Aorta (tissue), 5 donors: ENCODE measurements at regions of chr9 and their contacts with region 1.

Region 1: GRCh38 chr9:13915591-13916326 is 398.2 kb downstream of the NFIB start:
- DNase-seq: no peak
- ATAC-seq: peak; percentile 51
- H3K4me3 ChIP-seq: no peak overlapping the region
- H3K27ac ChIP-seq: peak overlapping the region; percentile 67 to 71
- H3K4me1 ChIP-seq: peaks cover 3 to 4% of the 10 kb centered on the region in 2 donors
- H3K27me3 ChIP-seq: no peaks in the 10 kb centered on the region

Region 2: GRCh38 chr9:14322211-14323082 is 406.7 kb after region 1 on chr9:
- intact Hi-C with region 1: loop called in 1 of 2 experiments (anchors 2 kb)
- DNase-seq: peak; percentile 95 to 97
- ATAC-seq: peak; percentile 94
- H3K4me3 ChIP-seq: peak overlapping the region; percentile 54 to 79
- H3K27ac ChIP-seq: peak overlapping the region; percentile 31 to 87
- H3K4me1 ChIP-seq: no peaks in the 10 kb centered on the region
- H3K27me3 ChIP-seq: no peaks in the 10 kb centered on the region